CD4-positive, alpha-beta T cell (primary cell): ENCODE measurements at regions of chr1 and their contacts with region 1.

Region 1: DNA sequence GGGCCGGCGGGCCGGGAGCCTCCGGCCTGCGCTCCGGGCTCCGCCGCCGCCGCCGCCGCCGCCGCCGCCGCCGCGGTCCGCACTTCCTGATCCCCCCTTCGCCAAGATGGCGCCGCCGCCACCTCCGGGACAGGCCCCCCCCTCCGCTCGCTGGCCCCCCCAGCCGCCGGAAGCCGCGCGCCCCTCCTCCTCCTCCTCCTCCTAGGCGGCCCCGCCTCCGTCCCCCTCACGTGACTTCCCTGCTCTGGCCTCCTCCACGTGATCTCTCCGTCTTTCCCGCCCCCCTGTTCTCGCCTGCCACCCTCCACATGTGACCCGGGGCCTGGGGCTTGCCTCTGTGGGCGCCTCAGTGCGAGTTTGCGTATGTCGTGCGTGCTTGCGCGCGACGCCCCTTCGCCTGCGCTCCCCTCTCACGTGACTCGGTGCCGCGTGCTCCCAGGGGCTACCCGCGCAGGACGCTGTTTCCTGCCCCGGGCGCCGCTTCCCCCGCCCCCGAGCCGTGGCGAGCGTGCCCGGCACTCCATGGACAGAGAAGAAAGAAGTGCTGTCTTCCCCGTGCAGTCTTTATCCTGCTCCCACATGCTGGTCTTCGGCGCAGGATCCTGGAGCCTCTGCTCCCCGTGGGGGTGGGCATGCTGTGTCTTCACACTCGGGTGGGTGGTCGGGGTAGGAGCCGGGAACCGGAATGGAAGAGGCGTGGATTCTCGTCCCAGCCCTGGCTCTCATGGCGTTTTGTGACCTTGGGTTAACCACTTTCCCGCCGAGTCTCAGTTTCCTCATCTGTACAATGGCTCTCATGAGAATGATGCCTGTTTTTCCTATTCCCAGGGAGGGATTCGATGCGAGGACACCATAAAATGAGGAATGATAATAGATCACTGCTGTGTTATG is at the start of gene UBE2Q1:
- DNase-seq: peak; percentile 99 to 100 (median 99)
- ATAC-seq: peak; percentile 87
- H3K4me3 ChIP-seq: peak within 1 kb of the TSS; percentile 87
- H3K4me3 Mint-ChIP-seq: peak within 1 kb of the TSS; percentile 91
- H3K27ac ChIP-seq: peak within 1 kb of the TSS; percentile 64 to 84
- H3K27ac Mint-ChIP-seq: peak within 1 kb of the TSS; percentile 83
- H3K4me1 ChIP-seq: peaks cover 46% of the 10 kb centered on the region
- H3K4me1 Mint-ChIP-seq: peaks cover 42% of the 10 kb centered on the region
- H3K27me3 ChIP-seq: no peaks in the 10 kb centered on the region
- H3K27me3 Mint-ChIP-seq: no peaks in the 10 kb centered on the region
- CTCF ChIP-seq: no peak
- total RNA-seq, gene UBE2Q1: 78.7 to 82.3 TPM

Region 2: GRCh38 chr1:154198756-154199562 is 359.9 kb before region 1 on chr1:
- CTCF ChIA-PET with region 1: no interaction called
- POLR2A ChIA-PET with region 1: no interaction called
- intact Hi-C with region 1: loop called in 1 of 2 experiments (anchors 10 kb)
- DNase-seq: peak in 11 of 14 experiments; percentile 5 to 81 (median 30)
- ATAC-seq: peak; percentile 90
- H3K4me3 ChIP-seq: no peak overlapping the region
- H3K4me3 Mint-ChIP-seq: no peak overlapping the region
- H3K27ac ChIP-seq: no peak overlapping the region
- H3K27ac Mint-ChIP-seq: no peak overlapping the region
- H3K4me1 ChIP-seq: peaks cover 3% of the 10 kb centered on the region
- H3K4me1 Mint-ChIP-seq: no peaks in the 10 kb centered on the region
- H3K27me3 ChIP-seq: no peaks in the 10 kb centered on the region
- H3K27me3 Mint-ChIP-seq: peaks cover 3% of the 10 kb centered on the region
- CTCF ChIP-seq: peak; percentile 71

Region 3: GRCh38 chr1:154324669-154325582 is 233.9 kb before region 1 on chr1 and contains the start of gene ATP8B2:
- CTCF ChIA-PET with region 1: no interaction called
- POLR2A ChIA-PET with region 1: no interaction called
- intact Hi-C with region 1: loop called in 1 of 2 experiments (anchors 5 kb)
- DNase-seq: peak; percentile 68 to 90 (median 74)
- ATAC-seq: peak; percentile 57
- H3K4me3 ChIP-seq: peak within 1 kb of the TSS; percentile 70
- H3K4me3 Mint-ChIP-seq: peak within 1 kb of the TSS; percentile 94
- H3K27ac ChIP-seq: peak within 1 kb of the TSS; percentile 80 to 86
- H3K27ac Mint-ChIP-seq: peak within 1 kb of the TSS; percentile 90
- H3K4me1 ChIP-seq: peaks cover 52% of the 10 kb centered on the region
- H3K4me1 Mint-ChIP-seq: peaks cover 36% of the 10 kb centered on the region
- H3K27me3 ChIP-seq: no peaks in the 10 kb centered on the region
- H3K27me3 Mint-ChIP-seq: no peaks in the 10 kb centered on the region
- CTCF ChIP-seq: peak; percentile 95
- total RNA-seq, gene ATP8B2: 72.7 to 80.7 TPM

Region 4: GRCh38 chr1:154598871-154599635 is 40.2 kb after region 1 on chr1:
- CTCF ChIA-PET with region 1: no interaction called
- POLR2A ChIA-PET with region 1: no interaction called
- intact Hi-C with region 1: no loop called
- DNase-seq: no peak
- ATAC-seq: no peak
- H3K4me3 ChIP-seq: no peak overlapping the region
- H3K4me3 Mint-ChIP-seq: no peak overlapping the region
- H3K27ac ChIP-seq: no peak overlapping the region
- H3K27ac Mint-ChIP-seq: peak overlapping the region; percentile 39
- H3K4me1 ChIP-seq: peaks cover 43% of the 10 kb centered on the region
- H3K4me1 Mint-ChIP-seq: peaks cover 53% of the 10 kb centered on the region
- H3K27me3 ChIP-seq: no peaks in the 10 kb centered on the region
- H3K27me3 Mint-ChIP-seq: no peaks in the 10 kb centered on the region
- CTCF ChIP-seq: no peak

Region 5: GRCh38 chr1:154627257-154628120 is 68.7 kb after region 1 on chr1:
- CTCF ChIA-PET with region 1: interaction called, 3 read pairs
- POLR2A ChIA-PET with region 1: no interaction called
- intact Hi-C with region 1: loop called in 1 of 2 experiments (anchors 5 kb)
- DNase-seq: peak; percentile 79 to 94 (median 91)
- ATAC-seq: peak; percentile 70
- H3K4me3 ChIP-seq: peak overlapping the region; percentile 94
- H3K4me3 Mint-ChIP-seq: peak overlapping the region; percentile 95
- H3K27ac ChIP-seq: peak overlapping the region; percentile 91 to 98
- H3K27ac Mint-ChIP-seq: peak overlapping the region; percentile 99
- H3K4me1 ChIP-seq: peaks cover 22% of the 10 kb centered on the region
- H3K4me1 Mint-ChIP-seq: peaks cover 45% of the 10 kb centered on the region
- H3K27me3 ChIP-seq: no peaks in the 10 kb centered on the region
- H3K27me3 Mint-ChIP-seq: peaks cover 7% of the 10 kb centered on the region
- CTCF ChIP-seq: no peak

Region 6: GRCh38 chr1:154747740-154748404 is 189.1 kb after region 1 on chr1:
- CTCF ChIA-PET with region 1: no interaction called
- POLR2A ChIA-PET with region 1: no interaction called
- intact Hi-C with region 1: no loop called
- DNase-seq: peak; percentile 22 to 70 (median 54)
- ATAC-seq: peak; percentile 88
- H3K4me3 ChIP-seq: peak overlapping the region; percentile 24
- H3K4me3 Mint-ChIP-seq: peak overlapping the region; percentile 83
- H3K27ac ChIP-seq: peak overlapping the region; percentile 50 to 61
- H3K27ac Mint-ChIP-seq: peak overlapping the region; percentile 93
- H3K4me1 ChIP-seq: peaks cover 48% of the 10 kb centered on the region
- H3K4me1 Mint-ChIP-seq: peaks cover 54% of the 10 kb centered on the region
- H3K27me3 ChIP-seq: no peaks in the 10 kb centered on the region
- H3K27me3 Mint-ChIP-seq: no peaks in the 10 kb centered on the region
- CTCF ChIP-seq: no peak

Region 7: GRCh38 chr1:154863315-154864174 is 304.7 kb after region 1 on chr1:
- CTCF ChIA-PET with region 1: no interaction called
- POLR2A ChIA-PET with region 1: no interaction called
- intact Hi-C with region 1: no loop called
- DNase-seq: peak in 8 of 14 experiments; percentile 6 to 53 (median 21)
- ATAC-seq: peak; percentile 52
- H3K4me3 ChIP-seq: no peak overlapping the region
- H3K4me3 Mint-ChIP-seq: no peak overlapping the region
- H3K27ac ChIP-seq: no peak overlapping the region
- H3K27ac Mint-ChIP-seq: no peak overlapping the region
- H3K4me1 ChIP-seq: no peaks in the 10 kb centered on the region
- H3K4me1 Mint-ChIP-seq: peaks cover 3% of the 10 kb centered on the region
- H3K27me3 ChIP-seq: peaks cover 16 to 18% of the 10 kb centered on the region in 2 experiments
- H3K27me3 Mint-ChIP-seq: peaks cover 16% of the 10 kb centered on the region
- CTCF ChIP-seq: peak; percentile 43

Region 8: GRCh38 chr1:154878371-154879022 is 319.7 kb after region 1 on chr1:
- CTCF ChIA-PET with region 1: interaction called, 15 read pairs
- POLR2A ChIA-PET with region 1: interaction called, 4 read pairs
- intact Hi-C with region 1: loop called (anchors 1 kb)
- DNase-seq: peak; percentile 54 to 82 (median 64)
- ATAC-seq: peak; percentile 91
- H3K4me3 ChIP-seq: no peak overlapping the region
- H3K4me3 Mint-ChIP-seq: no peak overlapping the region
- H3K27ac ChIP-seq: no peak overlapping the region
- H3K27ac Mint-ChIP-seq: no peak overlapping the region
- H3K4me1 ChIP-seq: no peaks in the 10 kb centered on the region
- H3K4me1 Mint-ChIP-seq: no peaks in the 10 kb centered on the region
- H3K27me3 ChIP-seq: no peaks in the 10 kb centered on the region
- H3K27me3 Mint-ChIP-seq: peaks cover 5% of the 10 kb centered on the region
- CTCF ChIP-seq: peak; percentile 91

Region 9: DNA sequence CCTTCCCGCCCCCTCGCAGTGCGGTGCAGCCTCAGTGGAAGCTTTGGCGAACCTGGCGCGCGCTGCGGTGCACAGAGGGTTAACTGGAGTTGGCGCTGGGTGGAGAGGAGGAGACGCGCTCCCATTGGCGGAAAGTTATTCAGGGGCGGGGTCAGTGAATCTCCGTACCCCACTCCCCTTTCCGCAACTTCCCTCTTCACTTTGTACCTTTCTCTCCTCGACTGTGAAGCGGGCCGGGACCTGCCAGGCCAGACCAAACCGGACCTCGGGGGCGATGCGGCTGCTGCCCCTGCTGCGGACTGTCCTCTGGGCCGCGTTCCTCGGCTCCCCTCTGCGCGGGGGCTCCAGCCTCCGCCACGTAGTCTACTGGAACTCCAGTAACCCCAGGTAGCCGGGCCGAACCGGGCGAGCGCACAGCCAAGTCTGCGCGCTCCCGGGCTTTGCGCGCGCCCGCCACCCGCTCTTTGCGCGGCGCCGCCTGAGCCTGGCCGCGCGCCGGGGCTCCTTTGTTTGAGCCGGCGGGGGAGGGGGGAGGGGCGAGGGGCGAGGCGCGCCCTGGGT is 504.8 kb after region 1 on chr1 and contains the start of gene EFNA4:
- CTCF ChIA-PET with region 1: interaction called, 4 read pairs
- POLR2A ChIA-PET with region 1: no interaction called
- intact Hi-C with region 1: loop called (anchors 1 to 5 kb)
- DNase-seq: peak; percentile 69 to 92 (median 80)
- ATAC-seq: peak; percentile 90
- H3K4me3 ChIP-seq: peak within 1 kb of the TSS; percentile 76
- H3K4me3 Mint-ChIP-seq: peak within 1 kb of the TSS; percentile 96
- H3K27ac ChIP-seq: peak within 1 kb of the TSS in 1 of 2 donors; percentile 61
- H3K27ac Mint-ChIP-seq: peak within 1 kb of the TSS; percentile 70
- H3K4me1 ChIP-seq: peaks cover 41% of the 10 kb centered on the region
- H3K4me1 Mint-ChIP-seq: peaks cover 32% of the 10 kb centered on the region
- H3K27me3 ChIP-seq: no peaks in the 10 kb centered on the region
- H3K27me3 Mint-ChIP-seq: no peaks in the 10 kb centered on the region
- CTCF ChIP-seq: no peak
- total RNA-seq, gene EFNA4: 2.4 to 3.3 TPM